ENCODE measurements at regions of chr4 and their contacts with region 1.

Region 1: GRCh38 chr4:15457406-15458201 is 12.1 kb upstream of the CC2D2A start:
- DNase-seq: no peak
- ATAC-seq: peak; percentile 74

Region 2: GRCh38 chr4:14679906-14680305 is 777.7 kb before region 1 on chr4:
- intact Hi-C with region 1: no loop called
- DNase-seq: no peak
- ATAC-seq: no peak

Region 3: DNA sequence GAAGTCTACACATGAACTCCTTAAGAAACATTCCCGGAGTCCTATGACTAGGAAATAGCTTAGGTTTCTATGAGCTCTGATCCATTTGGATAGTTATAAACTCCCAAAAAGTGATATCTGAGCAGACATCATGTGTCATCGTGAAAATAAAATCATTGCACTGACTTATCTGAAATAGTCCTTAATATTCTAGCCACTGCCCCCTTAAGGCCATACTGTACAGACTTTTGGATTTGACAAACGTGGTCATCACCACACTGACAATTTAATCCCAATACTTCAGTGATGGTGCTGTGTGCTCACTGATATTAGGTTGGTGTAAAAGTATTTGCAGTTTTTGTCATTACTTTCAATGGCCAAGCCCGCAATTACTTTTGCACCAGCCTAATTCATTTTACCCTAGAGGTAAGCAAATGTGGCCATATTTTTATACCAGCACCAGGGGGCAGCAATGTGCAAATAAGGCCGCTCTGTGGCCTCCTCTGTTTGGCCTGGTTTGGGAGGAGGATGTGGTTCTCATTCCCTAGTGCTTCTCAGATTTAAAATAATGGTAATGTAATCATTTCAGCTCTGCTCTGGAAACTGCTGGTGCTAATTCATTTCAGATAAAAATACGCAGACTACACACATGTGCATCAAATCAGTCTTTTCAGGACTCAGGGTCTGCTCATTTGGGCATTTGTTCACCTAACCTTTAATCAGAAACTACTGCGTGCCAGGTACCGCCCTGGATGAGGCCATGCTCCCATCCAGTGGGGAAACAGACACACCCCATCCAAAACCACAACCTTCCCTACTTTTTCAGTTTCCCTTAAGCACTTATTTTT is 226.1 kb before region 1 on chr4:
- intact Hi-C with region 1: loop called (anchors 2 kb)
- DNase-seq: peak; percentile 62
- ATAC-seq: peak; percentile 88

Region 4: DNA sequence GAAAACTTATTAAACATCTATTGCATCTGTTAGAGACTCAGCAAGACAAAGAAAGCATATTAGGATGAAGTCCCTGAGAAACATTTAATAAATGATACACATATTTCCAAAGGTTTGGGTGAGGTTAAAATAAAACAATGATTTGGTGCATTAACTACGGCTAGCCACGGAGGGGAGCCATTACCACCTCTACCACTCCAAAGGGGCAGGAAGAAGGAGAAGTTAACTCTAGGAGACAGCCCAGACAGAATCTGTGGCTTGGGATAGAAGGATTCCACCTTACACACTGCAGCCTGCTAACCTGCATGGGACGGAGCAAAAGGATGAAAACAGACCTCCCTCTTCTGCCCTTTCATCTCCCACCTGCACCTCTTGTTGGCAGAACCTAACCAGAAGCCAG is 218.9 kb before region 1 on chr4:
- intact Hi-C with region 1: loop called (anchors 2 kb)
- DNase-seq: no peak
- ATAC-seq: peak; percentile 65

Region 5: DNA sequence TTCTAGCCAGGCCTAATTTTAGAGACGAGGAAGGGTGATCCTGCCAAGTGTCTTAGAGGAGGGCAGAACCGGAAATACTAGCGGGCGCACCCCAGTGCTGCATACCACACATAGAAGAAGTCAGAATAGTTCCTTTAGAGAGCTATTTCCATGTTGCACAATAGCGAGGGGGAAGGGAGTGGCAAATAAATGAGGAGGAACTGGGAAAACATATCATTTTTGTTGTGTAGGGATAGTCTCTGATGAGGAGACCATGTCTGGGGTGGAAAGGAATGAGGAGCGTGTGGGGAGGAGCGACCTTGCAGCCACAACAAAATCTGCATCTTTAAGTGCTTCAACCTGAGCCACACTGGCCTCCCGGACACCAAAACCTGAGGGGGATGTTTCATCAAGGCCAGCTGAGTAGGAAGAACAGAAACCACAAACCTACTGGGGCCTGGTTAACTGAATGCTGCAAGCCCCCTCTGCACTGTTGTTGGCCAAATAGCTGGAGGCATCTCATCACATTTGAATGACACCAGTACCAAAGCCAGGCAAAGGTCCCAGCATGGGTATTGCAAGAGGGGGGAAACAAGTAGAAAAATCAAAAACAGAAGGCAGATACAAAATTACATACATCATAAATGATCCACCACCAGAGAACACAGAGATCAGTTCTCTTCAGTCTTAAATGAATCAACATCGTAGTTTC is 56.5 kb before region 1 on chr4:
- intact Hi-C with region 1: loop called (anchors 10 kb)
- DNase-seq: peak; percentile 58
- ATAC-seq: peak; percentile 85

Region 6: DNA sequence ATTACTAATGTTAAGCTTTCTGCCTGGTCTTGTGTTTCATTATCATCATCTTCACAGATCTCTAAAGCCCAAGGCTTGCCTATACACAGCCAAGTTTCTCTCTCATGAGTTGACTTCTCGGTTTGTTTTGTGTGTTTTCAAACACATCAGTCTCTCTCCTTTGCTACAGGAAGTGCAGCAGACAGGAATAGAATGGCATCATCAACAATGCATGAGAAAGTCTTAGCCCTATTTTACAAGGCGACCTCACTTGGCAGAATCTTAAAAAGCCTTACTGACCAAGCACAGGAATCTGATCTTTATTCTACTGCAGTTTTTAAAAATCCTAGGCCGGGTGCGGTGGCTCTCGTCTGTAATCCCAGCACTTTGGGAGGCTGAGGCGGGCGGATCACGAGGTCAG is 48.9 kb after region 1 on chr4:
- intact Hi-C with region 1: no loop called
- DNase-seq: no peak
- ATAC-seq: no peak

Region 7: DNA sequence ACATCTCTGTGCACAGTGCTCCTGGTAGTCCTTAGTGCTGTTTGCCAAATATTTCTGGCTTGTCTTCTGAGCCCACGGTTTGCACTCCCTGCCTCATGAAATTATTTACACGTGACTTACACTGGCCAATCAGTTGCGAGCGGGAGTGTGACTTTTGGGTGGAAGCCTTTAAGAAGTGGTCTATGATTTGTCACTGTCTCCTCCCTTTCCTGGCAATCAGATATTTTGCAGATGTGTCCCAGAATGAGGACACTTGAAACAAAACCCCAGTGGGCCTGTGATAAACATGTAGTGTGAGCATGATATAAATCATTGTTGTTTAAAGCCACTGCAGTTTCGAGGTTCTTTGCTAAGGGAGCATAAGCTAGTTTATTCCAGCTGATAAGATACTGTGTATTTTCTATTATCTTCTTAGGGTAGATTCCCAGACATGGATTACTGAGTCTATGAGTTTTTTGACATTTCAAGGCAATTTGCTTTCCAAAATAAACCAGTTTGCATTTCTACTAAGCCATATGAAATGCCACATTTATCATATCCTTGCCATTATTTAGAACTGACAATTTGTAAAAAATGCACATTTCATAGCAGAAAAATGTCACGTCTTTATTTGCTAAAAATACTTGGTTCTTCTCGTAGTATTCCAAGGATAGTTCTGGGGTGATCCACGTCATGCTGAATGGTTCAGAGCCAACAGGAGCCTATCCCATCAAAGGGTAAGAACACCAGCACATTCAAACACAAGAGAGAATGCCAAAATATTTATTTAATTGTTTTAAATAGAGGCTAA is 257.2 kb after region 1 on chr4:
- intact Hi-C with region 1: no loop called
- DNase-seq: no peak
- ATAC-seq: peak; percentile 68